CD14-positive monocyte (primary cell): ENCODE measurements at regions of chr11 and their contacts with region 1.

Region 1: GRCh38 chr11:23041001-23041503 is 180.8 kb upstream of the CCDC179 start:
- DNase-seq: no peak
- H3K4me3 ChIP-seq: no peak overlapping the region
- H3K4me3 Mint-ChIP-seq: no peak overlapping the region
- H3K27ac ChIP-seq: no peak overlapping the region
- H3K27ac Mint-ChIP-seq: no peak overlapping the region
- H3K4me1 ChIP-seq: no peaks in the 10 kb centered on the region
- H3K4me1 Mint-ChIP-seq: no peaks in the 10 kb centered on the region
- H3K27me3 ChIP-seq: no peaks in the 10 kb centered on the region
- H3K27me3 Mint-ChIP-seq: no peaks in the 10 kb centered on the region
- CTCF ChIP-seq: no peak

Region 2: GRCh38 chr11:23288003-23288783 is 247.1 kb after region 1 on chr11:
- intact Hi-C with region 1: loop called in 1 of 2 experiments (anchors 10 kb)
- DNase-seq: no peak
- H3K4me3 ChIP-seq: no peak overlapping the region
- H3K4me3 Mint-ChIP-seq: no peak overlapping the region
- H3K27ac ChIP-seq: no peak overlapping the region
- H3K27ac Mint-ChIP-seq: no peak overlapping the region
- H3K4me1 ChIP-seq: no peaks in the 10 kb centered on the region
- H3K4me1 Mint-ChIP-seq: no peaks in the 10 kb centered on the region
- H3K27me3 ChIP-seq: no peaks in the 10 kb centered on the region
- H3K27me3 Mint-ChIP-seq: no peaks in the 10 kb centered on the region
- CTCF ChIP-seq: no peak